ENCODE measurements at regions of chr16 and their contacts with region 1.

Region 1: GRCh38 chr16:84970447-84971127 is 40.7 kb downstream of the ZDHHC7 start:
- DNase-seq: peak; percentile 76
- H3K4me3 Mint-ChIP-seq: no peak overlapping the region
- H3K27ac Mint-ChIP-seq: no peak overlapping the region
- H3K4me1 Mint-ChIP-seq: no peaks in the 10 kb centered on the region
- H3K27me3 Mint-ChIP-seq: peaks cover 5% of the 10 kb centered on the region
- CTCF ChIP-seq: peak; percentile 90

Region 2: GRCh38 chr16:84672276-84673202 is 298.0 kb before region 1 on chr16:
- CTCF ChIA-PET with region 1: interaction called, 10 read pairs
- POLR2A ChIA-PET with region 1: no interaction called
- intact Hi-C with region 1: no loop called
- DNase-seq: peak; percentile 73
- H3K4me3 Mint-ChIP-seq: no peak overlapping the region
- H3K27ac Mint-ChIP-seq: no peak overlapping the region
- H3K4me1 Mint-ChIP-seq: peaks cover 17% of the 10 kb centered on the region
- H3K27me3 Mint-ChIP-seq: no peaks in the 10 kb centered on the region
- CTCF ChIP-seq: peak; percentile 89

Region 3: GRCh38 chr16:84774810-84775209 is 195.8 kb before region 1 on chr16:
- CTCF ChIA-PET with region 1: interaction called, 14 read pairs
- POLR2A ChIA-PET with region 1: no interaction called
- intact Hi-C with region 1: no loop called
- DNase-seq: peak; percentile 86
- H3K4me3 Mint-ChIP-seq: no peak overlapping the region
- H3K27ac Mint-ChIP-seq: peak overlapping the region; percentile 82
- H3K4me1 Mint-ChIP-seq: peaks cover 8% of the 10 kb centered on the region
- H3K27me3 Mint-ChIP-seq: no peaks in the 10 kb centered on the region
- CTCF ChIP-seq: no peak

Region 4: GRCh38 chr16:84952335-84953189 is 18.0 kb before region 1 on chr16:
- CTCF ChIA-PET with region 1: interaction called, 55 read pairs
- POLR2A ChIA-PET with region 1: interaction called, 4 read pairs
- intact Hi-C with region 1: loop called (anchors 2 kb)
- DNase-seq: peak; percentile 83
- H3K4me3 Mint-ChIP-seq: no peak overlapping the region
- H3K27ac Mint-ChIP-seq: no peak overlapping the region
- H3K4me1 Mint-ChIP-seq: no peaks in the 10 kb centered on the region
- H3K27me3 Mint-ChIP-seq: no peaks in the 10 kb centered on the region
- CTCF ChIP-seq: peak; percentile 76

Region 5: DNA sequence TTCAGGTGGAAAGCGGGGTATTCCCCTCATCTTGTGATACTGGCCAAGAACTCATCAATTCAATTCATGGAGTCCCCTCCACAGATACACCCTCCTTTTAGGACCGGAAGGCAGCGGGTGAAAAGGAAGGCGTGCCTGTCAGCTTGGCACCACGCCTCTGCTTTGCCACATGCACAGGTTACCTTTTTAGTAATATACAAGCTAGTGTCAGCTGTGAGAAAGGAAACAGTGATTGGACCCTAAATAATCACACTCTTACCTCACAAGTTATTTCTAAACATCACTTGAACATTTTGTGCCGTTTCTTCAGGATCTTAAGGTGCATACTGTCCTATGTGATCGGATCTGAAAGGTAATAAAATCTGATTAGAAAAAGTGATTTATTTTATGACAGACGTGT is 25.1 kb after region 1 on chr16:
- CTCF ChIA-PET with region 1: interaction called, 12 read pairs
- POLR2A ChIA-PET with region 1: interaction called, 10 read pairs
- intact Hi-C with region 1: no loop called
- DNase-seq: peak; percentile 70
- H3K4me3 Mint-ChIP-seq: peak overlapping the region; percentile 59
- H3K27ac Mint-ChIP-seq: peak overlapping the region; percentile 96
- H3K4me1 Mint-ChIP-seq: peaks cover 48% of the 10 kb centered on the region
- H3K27me3 Mint-ChIP-seq: no peaks in the 10 kb centered on the region
- CTCF ChIP-seq: no peak

Measured in MCF 10A (cell line).